Activated naive CD4-positive, alpha-beta T cell treated with anti-CD3 and anti-CD28 coated beads for 36 hours (primary cell): ENCODE measurements at regions of chr2 and their contacts with region 1.

Region 1: GRCh38 chr2:136713739-136714138 is 51.6 kb upstream of the THSD7B start:
- DNase-seq: no peak
- H3K4me3 Mint-ChIP-seq: no peak overlapping the region
- H3K27ac Mint-ChIP-seq: no peak overlapping the region
- H3K4me1 Mint-ChIP-seq: no peaks in the 10 kb centered on the region
- H3K27me3 Mint-ChIP-seq: no peaks in the 10 kb centered on the region

Region 2: DNA sequence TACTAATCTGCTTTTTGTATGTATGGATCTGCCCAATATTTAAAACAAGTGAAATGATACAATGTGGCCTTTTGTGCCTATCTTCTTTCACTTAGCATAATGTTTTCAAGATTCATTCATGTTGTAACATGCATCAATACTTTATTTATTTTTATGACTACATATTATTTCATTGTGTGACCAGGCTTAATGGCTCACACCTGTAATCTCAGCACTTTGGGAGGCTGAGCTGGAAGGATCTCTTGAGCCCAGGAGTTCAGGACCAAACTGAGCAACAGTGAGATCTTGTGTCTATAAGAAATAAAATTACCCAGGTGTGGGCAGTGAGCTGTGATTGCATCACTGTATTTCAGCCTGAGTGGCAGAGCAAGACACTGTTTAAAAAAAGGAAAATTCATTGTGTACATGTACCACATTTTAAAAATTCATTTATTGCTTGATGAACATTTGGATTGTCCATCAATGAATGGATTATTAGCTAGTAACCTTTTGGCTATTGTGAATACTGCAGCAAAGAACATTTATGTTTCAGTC is 1821.1 kb after region 1 on chr2:
- CTCF ChIA-PET with region 1: interaction called, 10 read pairs
- intact Hi-C with region 1: no loop called
- DNase-seq: no peak
- H3K4me3 Mint-ChIP-seq: no peak overlapping the region
- H3K27ac Mint-ChIP-seq: no peak overlapping the region
- H3K4me1 Mint-ChIP-seq: peaks cover 10% of the 10 kb centered on the region
- H3K27me3 Mint-ChIP-seq: no peaks in the 10 kb centered on the region